ENCODE measurements at regions of chr1 and their contacts with region 1.

Region 1: GRCh38 chr1:240732390-240732789 is 120.4 kb upstream of the GREM2 start:
- DNase-seq: peak; percentile 20
- H3K4me3 Mint-ChIP-seq: no peak overlapping the region
- H3K27ac Mint-ChIP-seq: no peak overlapping the region
- H3K4me1 Mint-ChIP-seq: peaks cover 9% of the 10 kb centered on the region
- H3K27me3 Mint-ChIP-seq: no peaks in the 10 kb centered on the region
- CTCF ChIP-seq: peak; percentile 40

Region 2: DNA sequence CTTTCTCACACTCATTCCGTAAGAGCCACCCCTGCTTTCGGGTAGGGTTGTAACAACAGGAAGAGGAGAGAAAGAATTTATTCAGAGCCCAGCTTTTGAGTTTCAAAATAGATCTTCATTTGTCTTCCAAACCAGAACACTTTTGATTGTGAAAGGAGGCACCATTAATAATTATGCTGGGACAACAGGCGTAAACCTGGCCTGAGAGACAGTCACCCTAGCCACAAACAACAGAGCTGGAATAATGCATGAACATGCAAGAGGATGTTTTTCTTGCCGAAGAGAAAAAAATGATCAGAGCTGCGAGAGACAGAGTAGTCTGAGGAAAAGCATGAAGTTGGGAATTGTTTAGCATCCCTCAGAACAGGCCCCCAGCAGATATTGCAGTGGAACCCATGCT is 102.0 kb before region 1 on chr1:
- CTCF ChIA-PET with region 1: no interaction called
- intact Hi-C with region 1: no loop called
- DNase-seq: no peak
- H3K4me3 Mint-ChIP-seq: no peak overlapping the region
- H3K27ac Mint-ChIP-seq: no peak overlapping the region
- H3K4me1 Mint-ChIP-seq: no peaks in the 10 kb centered on the region
- H3K27me3 Mint-ChIP-seq: peaks cover 21% of the 10 kb centered on the region
- CTCF ChIP-seq: no peak

Region 3: GRCh38 chr1:240866724-240867123 is 134.3 kb after region 1 on chr1:
- CTCF ChIA-PET with region 1: interaction called, 4 read pairs
- intact Hi-C with region 1: loop called (anchors 1 kb)
- DNase-seq: no peak
- H3K4me3 Mint-ChIP-seq: no peak overlapping the region
- H3K27ac Mint-ChIP-seq: no peak overlapping the region
- H3K4me1 Mint-ChIP-seq: peaks cover 11% of the 10 kb centered on the region
- H3K27me3 Mint-ChIP-seq: no peaks in the 10 kb centered on the region
- CTCF ChIP-seq: no peak

Region 4: GRCh38 chr1:240888039-240888786 is 155.8 kb after region 1 on chr1:
- CTCF ChIA-PET with region 1: interaction called, 13 read pairs
- intact Hi-C with region 1: loop called (anchors 1 kb)
- DNase-seq: peak; percentile 82
- H3K4me3 Mint-ChIP-seq: no peak overlapping the region
- H3K27ac Mint-ChIP-seq: no peak overlapping the region
- H3K4me1 Mint-ChIP-seq: no peaks in the 10 kb centered on the region
- H3K27me3 Mint-ChIP-seq: no peaks in the 10 kb centered on the region
- CTCF ChIP-seq: peak; percentile 95

Region 5: DNA sequence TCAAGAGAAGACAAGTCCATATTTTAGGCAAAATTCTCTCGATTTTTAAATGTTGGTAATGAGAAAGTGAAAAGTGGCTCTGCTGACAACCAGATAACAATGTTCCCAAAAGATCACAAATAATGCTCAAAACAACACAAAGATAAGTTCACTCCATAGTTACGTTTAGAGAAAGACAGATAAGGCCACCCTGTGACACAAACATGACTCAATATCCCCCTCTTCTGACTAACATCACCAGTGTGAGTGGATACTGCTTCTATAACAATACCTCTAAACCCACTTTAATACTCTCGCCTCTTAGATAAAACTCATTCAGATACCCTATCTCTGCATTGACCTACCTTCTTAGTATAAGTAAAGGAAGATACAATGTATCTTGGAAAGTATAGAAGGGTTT is 675.8 kb after region 1 on chr1:
- CTCF ChIA-PET with region 1: no interaction called
- intact Hi-C with region 1: loop called (anchors 5 kb)
- DNase-seq: peak; percentile 18
- H3K4me3 Mint-ChIP-seq: no peak overlapping the region
- H3K27ac Mint-ChIP-seq: no peak overlapping the region
- H3K4me1 Mint-ChIP-seq: no peaks in the 10 kb centered on the region
- H3K27me3 Mint-ChIP-seq: peaks cover 14% of the 10 kb centered on the region
- CTCF ChIP-seq: peak; percentile 17

Region 6: GRCh38 chr1:241499910-241500309 is 767.5 kb after region 1 on chr1:
- CTCF ChIA-PET with region 1: no interaction called
- intact Hi-C with region 1: loop called (anchors 5 kb)
- DNase-seq: peak; percentile 28
- H3K4me3 Mint-ChIP-seq: no peak overlapping the region
- H3K27ac Mint-ChIP-seq: no peak overlapping the region
- H3K4me1 Mint-ChIP-seq: no peaks in the 10 kb centered on the region
- H3K27me3 Mint-ChIP-seq: no peaks in the 10 kb centered on the region
- CTCF ChIP-seq: no peak